Natural killer cell (primary cell): ENCODE measurements at regions of chr16 and their contacts with region 1.

Region 1: GRCh38 chr16:4734063-4734729 is at the starts of genes ANKS3 and DNAAF8:
- DNase-seq: peak; percentile 78 to 89
- ATAC-seq: peak; percentile 74 to 87 (median 78)
- H3K4me3 ChIP-seq: peak within 1 kb of the TSS; percentile 97
- H3K4me3 Mint-ChIP-seq: peak within 1 kb of the TSS; percentile 90
- H3K27ac ChIP-seq: peak within 1 kb of the TSS; percentile 73
- H3K27ac Mint-ChIP-seq: peak within 1 kb of the TSS; percentile 87 to 91
- H3K4me1 ChIP-seq: peaks cover 18% of the 10 kb centered on the region
- H3K4me1 Mint-ChIP-seq: peaks cover 12 to 24% of the 10 kb centered on the region in 2 donors
- H3K27me3 ChIP-seq: no peaks in the 10 kb centered on the region
- H3K27me3 Mint-ChIP-seq: no peaks in the 10 kb centered on the region
- CTCF ChIP-seq: no peak
- total RNA-seq, gene ANKS3: 19.7 to 20.8 (median 20.5) TPM
- total RNA-seq, gene DNAAF8: 0.54 TPM in 1 of 3 donors, not detected in the others

Region 2: DNA sequence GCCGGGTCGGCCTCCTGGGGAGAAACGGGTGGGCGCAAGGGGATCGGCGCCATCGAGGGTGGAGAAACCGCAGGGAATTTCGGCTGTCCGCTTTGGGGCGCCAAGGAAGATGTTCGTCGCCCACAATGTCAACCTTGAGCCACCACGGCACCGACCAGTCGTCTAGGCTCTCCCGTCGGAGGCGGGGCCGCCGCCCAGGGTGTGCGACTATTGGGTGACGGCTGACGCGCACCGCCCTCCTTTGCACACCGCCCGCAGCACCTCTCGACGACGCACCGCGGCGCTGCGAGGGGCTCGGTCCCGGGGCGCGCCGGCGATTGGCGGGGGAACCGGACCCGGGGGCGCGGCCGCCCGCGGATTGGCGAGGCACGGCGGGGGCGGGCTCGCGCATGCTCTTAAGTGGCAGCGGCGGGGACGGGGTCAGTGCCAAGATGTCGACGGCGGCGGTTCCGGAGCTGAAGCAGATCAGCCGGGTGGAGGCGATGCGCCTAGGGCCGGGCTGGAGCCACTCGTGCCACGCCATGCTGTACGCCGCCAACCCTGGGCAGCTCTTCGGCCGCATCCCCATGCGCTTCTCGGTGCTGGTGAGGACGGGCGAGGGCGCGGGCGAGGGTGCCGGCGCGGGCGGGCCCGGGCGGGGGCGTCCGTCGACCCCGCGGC is 40.8 kb before region 1 on chr16 and contains the start of gene NUDT16L1:
- intact Hi-C with region 1: loop called (anchors 1 kb)
- DNase-seq: peak; percentile 98
- ATAC-seq: peak; percentile 95 to 99 (median 96)
- H3K4me3 ChIP-seq: peak within 1 kb of the TSS; percentile 74
- H3K4me3 Mint-ChIP-seq: peak within 1 kb of the TSS; percentile 89
- H3K27ac ChIP-seq: peak within 1 kb of the TSS; percentile 59
- H3K27ac Mint-ChIP-seq: peak within 1 kb of the TSS; percentile 75 to 85
- H3K4me1 ChIP-seq: peaks cover 29% of the 10 kb centered on the region
- H3K4me1 Mint-ChIP-seq: peaks cover 7 to 9% of the 10 kb centered on the region in 2 donors
- H3K27me3 ChIP-seq: no peaks in the 10 kb centered on the region
- H3K27me3 Mint-ChIP-seq: no peaks in the 10 kb centered on the region
- CTCF ChIP-seq: no peak
- total RNA-seq, gene NUDT16L1: 30.8 to 39.1 (median 35.0) TPM

Region 3: DNA sequence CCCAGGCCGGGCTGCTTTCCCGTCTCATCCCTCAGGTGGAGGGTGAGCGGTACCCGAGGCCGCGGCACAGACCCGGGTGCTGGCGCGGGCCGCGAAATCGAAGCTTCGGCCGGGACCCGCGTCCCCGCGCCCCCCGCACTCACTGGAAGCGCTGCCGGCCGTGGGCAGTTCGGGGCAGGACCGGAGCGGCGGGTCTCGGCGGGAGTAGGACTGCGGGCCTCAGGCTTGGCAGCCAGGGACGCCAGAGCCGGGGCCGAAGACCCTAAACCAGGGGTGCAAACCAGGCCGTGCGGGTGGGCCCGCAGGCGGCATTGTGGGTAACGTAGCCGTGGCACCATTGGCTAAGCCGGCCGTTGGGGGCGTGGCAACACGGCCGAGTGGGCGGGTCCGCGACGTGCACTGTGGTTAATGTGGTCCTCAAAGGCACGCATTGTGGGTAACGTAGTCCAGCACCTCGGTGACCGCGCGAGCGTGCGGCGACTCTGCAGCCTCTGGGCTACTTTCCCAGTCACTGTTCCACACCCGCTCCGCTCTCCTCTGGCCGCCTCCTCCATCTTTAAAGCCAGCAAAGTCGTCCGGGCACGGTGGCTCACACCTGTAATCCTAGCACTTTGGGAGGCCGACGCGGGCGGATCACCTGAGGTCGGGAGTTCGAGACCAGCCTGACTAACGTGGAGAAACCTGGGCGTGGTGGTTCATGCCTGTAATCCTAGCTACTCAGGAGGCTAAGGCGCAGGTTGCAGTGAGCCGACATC is 32.9 kb after region 1 on chr16 and contains the start of gene ZNF500:
- intact Hi-C with region 1: loop called (anchors 2 kb)
- DNase-seq: peak; percentile 95 to 96
- ATAC-seq: peak; percentile 93 to 97 (median 97)
- H3K4me3 ChIP-seq: peak within 1 kb of the TSS; percentile 69
- H3K4me3 Mint-ChIP-seq: peak within 1 kb of the TSS; percentile 92
- H3K27ac ChIP-seq: peak within 1 kb of the TSS; percentile 73
- H3K27ac Mint-ChIP-seq: peak within 1 kb of the TSS; percentile 86 to 88
- H3K4me1 ChIP-seq: peaks cover 38% of the 10 kb centered on the region
- H3K4me1 Mint-ChIP-seq: peaks cover 30 to 34% of the 10 kb centered on the region in 2 donors
- H3K27me3 ChIP-seq: no peaks in the 10 kb centered on the region
- H3K27me3 Mint-ChIP-seq: no peaks in the 10 kb centered on the region
- CTCF ChIP-seq: no peak
- total RNA-seq, gene ZNF500: 11.4 to 20.3 (median 13.0) TPM

Region 4: DNA sequence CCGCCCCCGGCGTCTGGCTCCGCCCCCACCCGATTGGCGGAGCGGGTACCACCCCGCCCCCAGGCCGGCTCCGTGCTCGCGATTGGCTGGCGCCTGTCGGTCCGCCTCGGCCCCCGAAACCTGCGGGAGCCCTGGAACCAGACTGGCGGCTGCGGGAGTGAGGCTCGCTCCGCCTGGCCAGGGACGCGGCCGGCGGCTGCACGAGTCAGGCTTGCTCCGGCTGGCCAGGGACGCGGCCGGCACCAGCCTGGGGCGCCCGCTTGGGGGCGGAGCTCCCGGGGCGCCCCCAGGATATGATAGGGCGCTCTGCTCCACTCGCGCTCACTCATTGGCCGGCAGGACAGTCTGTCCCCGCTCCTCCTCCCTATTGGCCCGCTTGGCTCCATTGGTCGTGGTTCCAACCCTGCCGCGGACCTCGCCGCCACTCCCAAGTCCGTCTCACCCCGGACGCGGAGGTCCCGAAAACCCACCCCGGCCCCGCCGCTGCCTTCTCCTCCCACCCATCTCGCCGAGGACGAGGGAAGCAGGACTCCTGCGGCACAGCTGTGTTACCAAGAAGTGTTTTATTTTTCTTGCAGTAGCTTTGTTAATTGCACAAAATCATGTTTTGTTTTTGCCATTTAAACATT is 68.6 kb after region 1 on chr16:
- intact Hi-C with region 1: loop called (anchors 2 kb)
- DNase-seq: peak; percentile 91
- ATAC-seq: peak; percentile 93 to 97 (median 94)
- H3K4me3 ChIP-seq: peak overlapping the region; percentile 35
- H3K4me3 Mint-ChIP-seq: peak overlapping the region; percentile 82
- H3K27ac ChIP-seq: peak overlapping the region; percentile 58
- H3K27ac Mint-ChIP-seq: peak overlapping the region; percentile 51 to 82
- H3K4me1 ChIP-seq: peaks cover 27% of the 10 kb centered on the region
- H3K4me1 Mint-ChIP-seq: peaks cover 0 to 10% of the 10 kb centered on the region in 2 donors
- H3K27me3 ChIP-seq: no peaks in the 10 kb centered on the region
- H3K27me3 Mint-ChIP-seq: no peaks in the 10 kb centered on the region
- CTCF ChIP-seq: no peak